Cardiac septum (tissue), 1 donor: ENCODE measurements at regions of chr3 and their contacts with region 1.

Region 1: GRCh38 chr3:17204049-17204650 is 319.4 kb downstream of the PLCL2 start:
- DNase-seq: no peak

Region 2: DNA sequence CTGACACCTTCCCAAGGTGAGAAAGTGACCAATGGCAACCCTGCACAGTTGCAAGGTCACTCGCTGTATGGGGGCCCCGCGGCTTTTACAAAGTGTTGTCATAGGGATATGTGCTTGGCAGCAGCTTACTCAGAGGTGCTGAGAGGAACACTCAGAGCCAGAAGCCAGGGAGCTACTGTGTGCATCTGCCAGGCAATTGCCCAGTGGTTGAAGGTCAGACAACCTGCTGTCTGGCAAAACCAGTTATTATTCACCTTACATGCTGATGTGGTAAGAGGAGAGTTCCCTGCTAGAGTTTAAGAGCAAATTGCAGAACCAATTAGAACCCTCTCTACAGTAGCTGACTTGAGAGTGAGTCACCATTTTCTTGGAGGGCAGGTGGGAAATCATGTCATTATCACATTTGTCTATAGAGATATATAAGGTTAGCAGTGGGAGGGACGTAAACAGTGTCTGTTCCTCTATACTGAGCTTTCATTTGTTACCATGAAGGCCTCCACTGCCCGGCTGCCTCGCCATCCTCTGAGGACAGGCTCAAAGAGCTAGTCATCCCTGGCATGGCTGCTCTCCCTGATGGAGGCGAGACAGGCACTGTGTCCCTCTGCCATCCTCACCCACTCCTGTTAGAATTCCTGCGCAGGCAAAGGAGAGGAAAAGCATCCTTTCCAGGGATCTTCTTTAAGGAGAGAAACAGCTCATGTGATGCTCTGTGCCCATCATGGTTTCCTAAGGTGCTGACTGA is 45.0 kb before region 1 on chr3:
- intact Hi-C with region 1: loop called (anchors 1 kb)
- DNase-seq: no peak

Region 3: GRCh38 chr3:17243621-17244020 is 39.5 kb after region 1 on chr3:
- intact Hi-C with region 1: no loop called
- DNase-seq: no peak

Region 4: GRCh38 chr3:17336291-17336690 is 132.1 kb after region 1 on chr3:
- intact Hi-C with region 1: no loop called
- DNase-seq: no peak